B cell (primary cell): ENCODE measurements at regions of chr4 and their contacts with region 1.

Region 1: GRCh38 chr4:38034986-38035882 is 75.0 kb downstream of the PTTG2 start:
- DNase-seq: peak; percentile 71
- ATAC-seq: peak; percentile 67
- H3K4me3 ChIP-seq: no peak overlapping the region
- H3K4me3 Mint-ChIP-seq: no peak overlapping the region
- H3K27ac ChIP-seq: no peak overlapping the region
- H3K27ac Mint-ChIP-seq: no peak overlapping the region
- H3K4me1 ChIP-seq: no peaks in the 10 kb centered on the region
- H3K4me1 Mint-ChIP-seq: no peaks in the 10 kb centered on the region
- H3K27me3 ChIP-seq: no peaks in the 10 kb centered on the region
- H3K27me3 Mint-ChIP-seq: no peaks in the 10 kb centered on the region
- CTCF ChIP-seq: peak; percentile 91

Region 2: GRCh38 chr4:37603070-37603468 is 432.2 kb before region 1 on chr4:
- CTCF ChIA-PET with region 1: interaction called, 15 read pairs
- POLR2A ChIA-PET with region 1: interaction called, 3 read pairs
- intact Hi-C with region 1: loop called (anchors 1 kb)
- DNase-seq: peak; percentile 74
- ATAC-seq: peak; percentile 82
- H3K4me3 ChIP-seq: no peak overlapping the region
- H3K4me3 Mint-ChIP-seq: no peak overlapping the region
- H3K27ac ChIP-seq: no peak overlapping the region
- H3K27ac Mint-ChIP-seq: no peak overlapping the region
- H3K4me1 ChIP-seq: peaks cover 0 to 3% of the 10 kb centered on the region in 2 donors
- H3K4me1 Mint-ChIP-seq: peaks cover 2% of the 10 kb centered on the region
- H3K27me3 ChIP-seq: no peaks in the 10 kb centered on the region
- H3K27me3 Mint-ChIP-seq: peaks cover 7% of the 10 kb centered on the region
- CTCF ChIP-seq: peak; percentile 94

Region 3: DNA sequence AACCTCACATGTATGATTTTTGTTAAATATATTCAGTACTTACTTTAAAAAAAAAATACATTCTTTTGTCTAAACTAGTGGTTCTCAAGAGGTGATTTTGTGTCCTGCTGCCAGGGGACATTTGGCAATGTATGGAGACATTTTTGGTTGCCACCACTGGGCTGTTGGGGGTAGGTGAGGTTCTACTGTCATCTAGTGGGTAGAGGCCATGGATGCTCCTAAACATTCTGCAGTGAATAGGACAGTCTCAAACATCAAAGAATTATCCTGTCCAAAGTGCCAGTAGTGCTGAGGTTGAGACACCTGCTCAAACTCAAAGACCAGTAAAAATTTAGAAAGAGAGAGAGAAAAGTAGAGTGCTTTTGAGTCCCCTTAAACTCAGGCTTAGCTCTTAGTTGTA is 241.7 kb before region 1 on chr4:
- CTCF ChIA-PET with region 1: interaction called, 253 read pairs
- POLR2A ChIA-PET with region 1: no interaction called
- intact Hi-C with region 1: no loop called
- DNase-seq: peak; percentile 45
- ATAC-seq: no peak
- H3K4me3 ChIP-seq: no peak overlapping the region
- H3K4me3 Mint-ChIP-seq: no peak overlapping the region
- H3K27ac ChIP-seq: no peak overlapping the region
- H3K27ac Mint-ChIP-seq: no peak overlapping the region
- H3K4me1 ChIP-seq: no peaks in the 10 kb centered on the region
- H3K4me1 Mint-ChIP-seq: no peaks in the 10 kb centered on the region
- H3K27me3 ChIP-seq: no peaks in the 10 kb centered on the region
- H3K27me3 Mint-ChIP-seq: peaks cover 21% of the 10 kb centered on the region
- CTCF ChIP-seq: peak; percentile 73

Region 4: DNA sequence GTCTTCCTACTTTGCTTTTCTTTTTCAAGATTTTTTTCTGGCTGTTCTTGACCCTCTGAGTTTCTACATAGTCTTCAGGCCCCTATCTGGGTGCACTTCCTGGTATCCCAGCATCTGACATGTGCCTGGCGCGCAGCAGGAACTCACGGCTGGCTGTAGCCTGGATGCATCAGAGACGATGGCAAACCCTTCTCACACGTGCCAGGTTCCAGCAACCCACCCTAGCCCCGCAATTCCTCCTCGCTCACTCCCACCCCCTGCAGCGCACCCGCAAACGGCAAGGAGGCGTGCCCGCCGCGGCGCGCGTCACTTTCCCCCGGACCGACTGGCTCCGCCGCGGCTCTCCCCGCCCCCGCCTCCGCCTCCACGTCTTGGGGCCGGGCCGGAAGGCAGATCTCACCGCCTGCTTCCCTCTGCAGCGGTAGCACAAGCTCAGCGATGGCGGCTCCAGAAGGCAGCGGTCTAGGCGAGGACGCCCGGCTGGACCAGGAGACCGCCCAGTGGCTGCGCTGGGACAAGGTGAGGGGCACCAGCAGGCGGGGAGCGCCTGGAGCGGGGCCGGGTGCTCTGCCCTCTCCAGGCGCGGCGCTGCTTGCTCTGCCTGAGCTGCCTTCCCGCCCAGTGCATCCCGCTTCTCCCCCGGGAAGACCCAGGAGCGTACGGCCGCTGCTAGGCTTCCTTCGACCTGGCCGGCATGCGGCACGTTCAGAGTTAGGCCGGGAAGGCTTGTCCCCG is 208.8 kb before region 1 on chr4 and contains the start of gene PGM2:
- CTCF ChIA-PET with region 1: interaction called, 3 read pairs
- POLR2A ChIA-PET with region 1: no interaction called
- intact Hi-C with region 1: loop called (anchors 1 kb)
- DNase-seq: peak; percentile 92
- ATAC-seq: peak; percentile 96
- H3K4me3 ChIP-seq: peak within 1 kb of the TSS; percentile 89 to 100 (median 98)
- H3K4me3 Mint-ChIP-seq: peak within 1 kb of the TSS; percentile 99
- H3K27ac ChIP-seq: peak within 1 kb of the TSS; percentile 76 to 81
- H3K27ac Mint-ChIP-seq: peak within 1 kb of the TSS; percentile 96
- H3K4me1 ChIP-seq: peaks cover 18 to 21% of the 10 kb centered on the region in 2 donors
- H3K4me1 Mint-ChIP-seq: peaks cover 28% of the 10 kb centered on the region
- H3K27me3 ChIP-seq: no peaks in the 10 kb centered on the region
- H3K27me3 Mint-ChIP-seq: no peaks in the 10 kb centered on the region
- CTCF ChIP-seq: no peak
- total RNA-seq, gene PGM2: 19.0 and 20.9 TPM in 2 replicates

Region 5: DNA sequence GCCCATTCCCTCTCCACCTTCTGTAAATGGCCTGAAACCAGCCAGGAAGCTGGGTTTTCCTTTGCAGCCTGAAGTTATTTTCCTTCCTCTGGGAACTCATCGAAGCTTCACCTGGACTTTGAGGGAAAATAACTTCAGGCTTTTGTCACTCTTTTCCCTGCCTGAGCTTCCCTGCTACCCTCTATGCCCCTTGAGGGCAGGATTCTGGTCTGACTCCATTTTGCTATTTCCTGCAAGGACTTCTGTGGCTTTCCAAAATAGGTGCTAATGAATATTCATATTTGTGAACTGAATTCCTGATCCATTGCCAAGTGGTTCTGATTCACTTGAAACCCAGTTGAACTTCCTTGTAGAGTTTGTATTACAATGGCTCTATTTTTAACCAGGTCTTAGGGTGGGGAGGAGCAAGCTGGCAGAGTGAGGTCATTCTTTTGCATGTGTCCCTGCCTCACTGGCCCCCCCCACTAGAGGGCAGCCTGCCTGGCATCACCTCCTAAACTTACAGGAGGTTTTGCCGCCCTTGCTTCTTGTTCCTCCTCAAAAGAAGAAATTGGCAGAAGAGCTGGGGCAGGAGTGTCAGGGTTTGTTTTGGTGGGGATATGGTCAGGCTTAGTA is 64.6 kb before region 1 on chr4:
- CTCF ChIA-PET with region 1: interaction called, 8 read pairs
- POLR2A ChIA-PET with region 1: no interaction called
- intact Hi-C with region 1: loop called (anchors 2 kb)
- DNase-seq: peak; percentile 81
- ATAC-seq: peak; percentile 99
- H3K4me3 ChIP-seq: no peak overlapping the region
- H3K4me3 Mint-ChIP-seq: no peak overlapping the region
- H3K27ac ChIP-seq: peak overlapping the region in 1 of 2 donors; percentile 44
- H3K27ac Mint-ChIP-seq: peak overlapping the region; percentile 54
- H3K4me1 ChIP-seq: peaks cover 15 to 20% of the 10 kb centered on the region in 2 donors
- H3K4me1 Mint-ChIP-seq: peaks cover 40% of the 10 kb centered on the region
- H3K27me3 ChIP-seq: no peaks in the 10 kb centered on the region
- H3K27me3 Mint-ChIP-seq: no peaks in the 10 kb centered on the region
- CTCF ChIP-seq: peak; percentile 73

Region 6: DNA sequence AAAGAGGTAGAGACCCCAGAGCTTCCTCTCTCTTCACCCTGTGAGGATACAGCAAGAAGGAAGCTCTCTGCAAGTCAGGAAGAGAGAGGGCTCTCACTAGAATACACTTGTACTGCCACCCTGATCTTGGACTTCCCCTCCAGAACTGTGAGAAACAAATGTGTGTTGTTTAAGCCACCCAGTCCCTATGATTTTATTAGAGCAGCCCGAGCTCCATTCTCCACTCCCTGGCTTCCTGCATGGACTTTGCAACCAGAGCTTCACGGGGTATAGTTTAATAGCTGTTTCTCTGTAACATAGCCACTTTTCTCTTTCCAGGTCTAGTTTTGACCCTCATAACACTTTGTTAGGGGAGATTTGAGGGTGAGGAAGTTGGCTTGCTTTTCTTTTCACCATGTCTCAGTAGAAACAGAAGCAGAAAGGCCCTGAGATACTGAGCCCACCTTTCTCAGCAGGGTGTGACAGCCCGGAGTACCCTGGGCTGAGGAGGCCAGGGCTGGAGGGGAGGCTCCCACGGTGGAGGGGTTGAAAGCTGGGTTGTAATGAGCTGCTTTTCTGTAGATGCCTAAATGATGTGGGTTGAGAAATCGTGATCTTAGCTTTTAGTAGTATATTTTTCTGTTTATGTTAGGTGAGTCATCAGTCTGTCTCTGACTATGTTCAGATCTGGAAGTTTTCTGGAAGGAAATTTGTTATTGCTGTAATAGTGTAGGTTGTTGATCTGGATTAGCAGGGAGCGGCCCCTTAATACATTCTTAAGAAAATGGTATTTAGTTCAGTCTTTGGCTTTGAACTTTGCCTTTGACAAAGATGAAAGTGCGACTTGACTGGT is 43.6 kb after region 1 on chr4:
- CTCF ChIA-PET with region 1: no interaction called
- POLR2A ChIA-PET with region 1: no interaction called
- intact Hi-C with region 1: no loop called
- DNase-seq: no peak
- ATAC-seq: no peak
- H3K4me3 ChIP-seq: no peak overlapping the region
- H3K4me3 Mint-ChIP-seq: no peak overlapping the region
- H3K27ac ChIP-seq: peak overlapping the region; percentile 1 to 13
- H3K27ac Mint-ChIP-seq: peak overlapping the region; percentile 65
- H3K4me1 ChIP-seq: peaks cover 0 to 13% of the 10 kb centered on the region in 2 donors
- H3K4me1 Mint-ChIP-seq: peaks cover 30% of the 10 kb centered on the region
- H3K27me3 ChIP-seq: no peaks in the 10 kb centered on the region
- H3K27me3 Mint-ChIP-seq: no peaks in the 10 kb centered on the region
- CTCF ChIP-seq: no peak